Activated CD8-positive, alpha-beta T cell treated with anti-CD3 and anti-CD28 coated beads, Interleukin-2, amount 10 ng/mL, durations not matched to agents 7 days and 5 days (primary cell): ENCODE measurements at regions of chr15 and their contacts with region 1.

Region 1: GRCh38 chr15:94163999-94164807 is 67.2 kb upstream of the MCTP2 start:
- DNase-seq: peak; percentile 77
- ATAC-seq: no peak
- H3K4me3 Mint-ChIP-seq: no peak overlapping the region
- H3K27ac Mint-ChIP-seq: no peak overlapping the region
- H3K4me1 Mint-ChIP-seq: peaks cover 7% of the 10 kb centered on the region
- H3K27me3 Mint-ChIP-seq: peaks cover 18% of the 10 kb centered on the region

Region 2: GRCh38 chr15:94119923-94120775 is 44.1 kb before region 1 on chr15:
- CTCF ChIA-PET with region 1: interaction called, 11 read pairs
- POLR2A ChIA-PET with region 1: no interaction called
- DNase-seq: peak; percentile 75
- ATAC-seq: peak; percentile 99
- H3K4me3 Mint-ChIP-seq: no peak overlapping the region
- H3K27ac Mint-ChIP-seq: no peak overlapping the region
- H3K4me1 Mint-ChIP-seq: no peaks in the 10 kb centered on the region
- H3K27me3 Mint-ChIP-seq: peaks cover 10% of the 10 kb centered on the region

Region 3: DNA sequence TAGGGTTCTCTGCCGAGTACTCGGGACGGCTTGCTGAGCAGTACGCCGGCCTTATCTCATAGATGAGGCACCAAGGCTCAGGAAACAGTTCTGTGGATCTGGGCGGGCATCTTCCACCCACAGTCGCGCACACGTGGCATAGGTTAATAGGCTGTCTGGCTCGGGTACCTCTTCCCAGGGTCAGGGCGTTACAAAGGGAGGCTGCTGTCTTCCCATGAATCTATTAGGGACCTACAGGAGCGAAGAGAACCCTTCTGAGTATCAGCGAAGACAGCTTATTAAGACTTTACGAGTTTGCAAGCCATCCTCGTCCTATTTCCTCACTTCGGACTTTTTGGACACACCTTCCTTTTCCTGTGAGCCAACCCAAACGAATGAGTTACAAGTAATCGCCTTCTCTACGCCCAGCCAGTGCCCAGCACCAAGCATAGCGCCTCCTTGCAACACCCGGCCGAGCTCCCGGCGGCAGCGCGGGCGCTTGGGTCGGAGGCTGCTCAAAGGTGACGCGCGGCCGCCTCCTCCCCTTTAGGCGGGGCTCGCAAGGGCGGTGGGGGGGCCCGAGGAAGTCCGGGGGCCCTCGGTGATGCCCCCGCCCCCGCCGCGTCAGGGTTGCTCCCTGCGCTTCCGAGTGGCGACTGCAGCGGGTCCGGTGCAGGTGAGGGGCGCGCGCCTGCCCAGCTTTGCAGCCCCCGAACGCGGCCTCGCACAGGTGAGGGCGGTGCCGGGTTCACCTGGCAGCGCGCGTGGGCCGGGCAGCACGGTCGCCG is 66.9 kb after region 1 on chr15 and contains the start of gene MCTP2:
- CTCF ChIA-PET with region 1: interaction called, 35 read pairs
- POLR2A ChIA-PET with region 1: interaction called, 4 read pairs
- DNase-seq: peak; percentile 92
- ATAC-seq: peak; percentile 90
- H3K4me3 Mint-ChIP-seq: peak within 1 kb of the TSS; percentile 92
- H3K27ac Mint-ChIP-seq: peak within 1 kb of the TSS; percentile 96
- H3K4me1 Mint-ChIP-seq: peaks cover 66% of the 10 kb centered on the region
- H3K27me3 Mint-ChIP-seq: peaks cover 3% of the 10 kb centered on the region
- total RNA-seq, gene MCTP2: 26.2 to 26.9 TPM

Region 4: DNA sequence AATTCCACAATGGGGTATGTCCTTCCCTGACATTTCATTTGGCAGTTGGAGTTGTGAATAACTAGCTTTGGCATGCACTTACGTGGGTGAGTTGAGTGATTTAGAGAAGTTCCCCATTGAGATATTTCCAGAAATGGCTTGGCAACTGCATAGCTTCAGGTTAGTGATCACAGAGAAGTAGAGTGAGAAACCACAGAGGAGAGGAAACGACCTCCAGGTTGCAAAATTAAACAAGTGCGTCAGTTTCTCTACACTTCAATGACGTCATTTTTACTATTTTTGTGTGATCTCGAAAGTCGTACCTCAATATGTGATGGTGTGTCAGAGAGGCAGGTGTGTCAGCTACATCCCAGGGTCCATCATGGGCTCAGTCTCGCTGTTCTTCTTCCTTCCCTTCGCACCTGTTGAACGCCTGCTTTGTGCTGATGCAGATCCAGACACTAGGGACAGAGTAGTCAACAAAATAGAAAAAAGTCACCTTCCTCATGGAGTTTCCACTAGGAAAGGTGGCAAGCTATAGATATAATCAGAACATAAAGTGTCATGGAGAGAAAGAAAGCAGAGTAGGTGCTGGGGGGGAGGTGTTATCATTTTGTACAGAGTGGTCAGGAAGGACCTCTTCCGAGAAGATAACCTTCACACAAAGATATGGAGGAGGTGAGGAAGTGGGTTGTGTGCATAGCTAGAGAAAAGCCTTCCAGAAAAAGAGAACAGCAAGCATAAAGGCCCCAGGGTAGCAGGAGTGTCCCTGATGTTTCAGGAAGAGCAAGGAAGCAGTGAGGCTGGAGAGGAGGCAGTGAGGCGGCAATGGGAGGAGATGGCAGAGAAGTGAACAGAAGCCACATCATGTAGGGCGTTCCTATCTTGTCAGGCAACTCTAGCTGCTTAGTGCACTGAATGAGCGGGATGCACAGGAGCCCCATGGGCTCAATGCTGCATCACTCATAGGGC is 142.8 kb after region 1 on chr15:
- CTCF ChIA-PET with region 1: interaction called, 23 read pairs
- POLR2A ChIA-PET with region 1: no interaction called
- DNase-seq: peak; percentile 51
- ATAC-seq: peak; percentile 38
- H3K4me3 Mint-ChIP-seq: peak overlapping the region; percentile 37
- H3K27ac Mint-ChIP-seq: peak overlapping the region; percentile 88
- H3K4me1 Mint-ChIP-seq: peaks cover 66% of the 10 kb centered on the region
- H3K27me3 Mint-ChIP-seq: no peaks in the 10 kb centered on the region

Region 5: GRCh38 chr15:94359721-94360120 is 195.5 kb after region 1 on chr15:
- CTCF ChIA-PET with region 1: interaction called, 12 read pairs
- POLR2A ChIA-PET with region 1: no interaction called
- DNase-seq: no peak
- ATAC-seq: no peak
- H3K4me3 Mint-ChIP-seq: no peak overlapping the region
- H3K27ac Mint-ChIP-seq: no peak overlapping the region
- H3K4me1 Mint-ChIP-seq: peaks cover 15% of the 10 kb centered on the region
- H3K27me3 Mint-ChIP-seq: no peaks in the 10 kb centered on the region